ENCODE measurements at regions of chr6 and their contacts with region 1.

Region 1: GRCh38 chr6:16761471-16762267 is 409 bp upstream of the ATXN1 start:
- DNase-seq: peak; percentile 94
- ATAC-seq: peak; percentile 53

Region 2: DNA sequence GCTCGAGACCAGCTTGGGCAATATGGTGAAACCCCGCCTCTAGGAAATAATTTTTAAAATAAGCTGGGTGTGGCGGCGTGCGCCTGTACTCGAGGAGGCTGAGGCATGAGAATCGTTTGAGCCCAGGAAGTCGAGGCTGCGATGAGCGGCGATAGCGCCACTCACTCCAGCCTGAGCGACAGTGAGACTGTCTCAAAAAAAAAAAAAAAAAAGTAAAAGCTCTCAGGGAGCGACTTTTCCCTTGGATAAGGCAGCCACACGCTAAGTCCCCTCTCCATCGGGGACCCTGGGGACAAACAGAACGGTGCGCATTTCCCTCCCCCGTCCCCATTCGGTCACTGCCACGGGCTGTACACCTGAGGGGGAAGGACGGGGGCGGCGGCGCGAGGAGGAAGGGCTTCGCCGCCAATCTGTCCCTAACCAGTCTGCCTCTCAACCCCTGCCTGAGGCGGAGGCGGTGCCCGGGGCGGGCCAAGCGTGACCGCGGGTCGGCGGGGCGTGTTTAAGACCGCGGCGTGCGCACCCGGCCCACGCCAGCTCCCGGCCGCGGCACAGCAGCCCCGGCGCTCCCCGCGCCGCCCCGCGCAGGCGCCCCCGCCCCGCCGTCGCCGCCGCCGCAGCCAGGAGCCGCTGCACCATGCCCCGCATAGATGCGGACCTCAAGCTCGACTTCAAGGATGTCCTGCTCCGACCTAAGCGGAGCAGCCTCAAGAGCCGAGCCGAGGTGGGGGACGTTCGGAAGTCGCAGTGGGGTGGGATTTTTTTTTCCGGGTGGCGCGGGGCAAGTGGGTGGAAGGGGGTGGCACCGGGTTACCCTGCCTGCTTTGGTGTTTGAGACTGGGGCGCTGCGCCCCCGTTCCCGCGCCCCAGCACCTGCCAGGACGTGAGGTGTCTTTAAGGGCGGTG is 523.4 kb before region 1 on chr6 and contains the start of gene GMPR:
- intact Hi-C with region 1: loop called (anchors 10 kb)
- DNase-seq: peak; percentile 93
- ATAC-seq: peak; percentile 88
- total RNA-seq, gene GMPR: 125 TPM

Region 3: GRCh38 chr6:16432075-16433032 is 329.3 kb before region 1 on chr6:
- intact Hi-C with region 1: loop called (anchors 10 kb)
- DNase-seq: no peak
- ATAC-seq: no peak

Region 4: DNA sequence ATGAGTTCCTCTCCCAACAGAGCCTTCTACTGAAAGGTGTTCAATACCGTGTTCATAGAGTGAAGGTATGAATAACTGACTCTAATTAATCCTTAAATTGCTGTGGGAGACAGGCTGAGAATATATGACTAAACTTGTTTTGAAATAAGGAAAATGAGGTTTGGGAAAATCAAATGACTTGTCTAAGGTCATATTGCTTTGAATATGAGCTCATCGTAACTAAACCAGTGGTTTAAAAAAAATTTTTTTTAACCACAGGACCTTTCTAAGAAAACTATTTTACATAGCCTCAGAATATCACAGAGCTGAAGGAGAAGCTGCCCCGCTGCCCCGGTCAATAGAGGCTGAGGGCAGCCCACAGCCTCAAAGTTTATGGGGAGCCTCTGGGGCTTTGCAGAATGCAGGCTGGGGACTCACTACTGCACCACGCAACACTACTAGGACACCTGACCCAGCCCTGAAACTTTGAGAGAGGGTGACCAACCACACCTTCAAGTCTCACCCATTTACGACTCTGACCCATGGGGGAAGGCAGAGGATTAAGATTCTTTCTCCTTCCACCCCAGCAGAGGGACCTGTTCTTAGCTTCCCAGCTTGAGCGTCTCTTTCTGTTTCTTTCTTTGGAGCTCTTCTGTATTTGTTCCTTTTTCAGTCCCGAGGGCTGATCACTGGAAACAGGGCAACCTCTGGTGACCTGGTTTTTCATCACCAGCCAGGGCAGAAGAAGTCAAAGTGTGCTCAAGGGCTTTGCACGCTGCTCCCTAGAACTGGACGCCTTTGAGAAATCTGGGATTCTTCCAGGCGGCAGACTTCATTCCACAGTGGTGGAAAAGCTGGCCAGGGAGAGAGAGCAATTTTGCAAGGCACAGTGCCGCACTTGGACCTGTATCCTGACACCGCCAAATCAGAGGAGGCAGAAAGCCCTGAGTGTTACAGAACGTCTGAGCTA is 220.6 kb before region 1 on chr6:
- intact Hi-C with region 1: loop called (anchors 2 kb)
- DNase-seq: no peak
- ATAC-seq: peak; percentile 74

Region 5: GRCh38 chr6:16964553-16965501 is 203.2 kb after region 1 on chr6:
- intact Hi-C with region 1: loop called (anchors 2 kb)
- DNase-seq: peak; percentile 73
- ATAC-seq: peak; percentile 85

Region 6: GRCh38 chr6:17086469-17086868 is 324.8 kb after region 1 on chr6:
- intact Hi-C with region 1: no loop called
- DNase-seq: peak; percentile 56
- ATAC-seq: peak; percentile 57